Prostate gland (tissue), 2 donors: ENCODE measurements at regions of chr6 and their contacts with region 1.

Region 1: DNA sequence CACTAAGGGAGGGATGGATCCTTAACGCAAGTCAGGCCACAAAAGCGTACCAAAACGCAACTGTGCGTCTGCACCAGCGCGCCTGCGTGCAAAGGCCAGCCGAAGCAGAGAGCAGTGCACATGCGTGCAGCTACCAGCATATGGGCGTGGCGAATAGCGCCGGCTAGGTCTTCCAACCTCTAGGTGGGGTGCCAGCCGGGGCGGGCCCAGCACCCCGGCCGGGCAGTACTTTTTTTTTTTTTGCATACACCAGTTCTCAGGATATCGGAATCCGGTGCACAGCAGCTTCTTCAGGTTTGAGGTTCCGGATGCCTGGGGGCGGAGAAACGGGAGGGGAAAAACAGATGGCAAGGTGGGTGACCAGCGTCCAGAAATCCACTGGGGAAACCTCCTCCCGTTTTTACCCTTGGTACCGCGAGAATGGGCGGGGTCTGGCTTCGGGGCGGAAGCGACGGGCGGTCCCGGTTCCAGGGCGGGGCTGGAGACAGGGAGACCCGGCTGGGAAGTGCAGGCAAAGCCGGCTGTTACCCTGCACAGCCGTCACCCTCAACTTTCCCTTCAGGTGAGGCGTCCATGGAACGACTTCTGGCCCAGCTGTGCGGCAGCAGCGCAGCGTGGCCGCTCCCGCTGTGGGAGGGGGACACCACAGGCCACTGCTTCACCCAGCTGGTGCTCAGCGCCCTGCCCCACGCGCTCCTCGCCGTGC is at the start of gene ABCC10:
- DNase-seq: peak; percentile 92
- H3K4me3 ChIP-seq: peak within 1 kb of the TSS; percentile 51 to 69
- H3K27ac ChIP-seq: peak within 1 kb of the TSS; percentile 75 to 77
- H3K4me1 ChIP-seq: peaks cover 3% of the 10 kb centered on the region
- H3K27me3 ChIP-seq: no peaks in the 10 kb centered on the region
- CTCF ChIP-seq: peak; percentile 19 to 64 (median 36)
- POLR2A ChIP-seq: peak; percentile 73
- total RNA-seq, gene ABCC10: 18.0 to 38.1 TPM

Region 2: GRCh38 chr6:42217519-42218367 is 1209.8 kb before region 1 on chr6 and contains the start of gene MRPS10:
- intact Hi-C with region 1: no loop called
- DNase-seq: peak; percentile 90
- H3K4me3 ChIP-seq: peak within 1 kb of the TSS; percentile 53 to 66
- H3K27ac ChIP-seq: peak within 1 kb of the TSS; percentile 51 to 72
- H3K4me1 ChIP-seq: no peaks in the 10 kb centered on the region
- H3K27me3 ChIP-seq: no peaks in the 10 kb centered on the region
- CTCF ChIP-seq: peak in 1 of 4 experiments; percentile 3
- POLR2A ChIP-seq: peak; percentile 45
- total RNA-seq, gene MRPS10: 27.5 to 31.8 TPM

Region 3: GRCh38 chr6:43355862-43356590 is 71.5 kb before region 1 on chr6:
- intact Hi-C with region 1: no loop called
- DNase-seq: no peak
- H3K4me3 ChIP-seq: no peak overlapping the region
- H3K27ac ChIP-seq: no peak overlapping the region
- H3K4me1 ChIP-seq: no peaks in the 10 kb centered on the region
- H3K27me3 ChIP-seq: no peaks in the 10 kb centered on the region
- CTCF ChIP-seq: peak in 2 of 4 experiments; percentile 17 to 20
- POLR2A ChIP-seq: no peak

Region 4: GRCh38 chr6:43369174-43370022 is 58.2 kb before region 1 on chr6 and contains the start of gene ZNF318:
- intact Hi-C with region 1: loop called (anchors 1 kb)
- DNase-seq: peak; percentile 95
- H3K4me3 ChIP-seq: peak within 1 kb of the TSS; percentile 62 to 88
- H3K27ac ChIP-seq: peak within 1 kb of the TSS; percentile 81 to 88
- H3K4me1 ChIP-seq: peaks cover 3% of the 10 kb centered on the region
- H3K27me3 ChIP-seq: no peaks in the 10 kb centered on the region
- CTCF ChIP-seq: no peak
- POLR2A ChIP-seq: no peak
- total RNA-seq, gene ZNF318: 15.1 to 41.6 TPM

Region 5: DNA sequence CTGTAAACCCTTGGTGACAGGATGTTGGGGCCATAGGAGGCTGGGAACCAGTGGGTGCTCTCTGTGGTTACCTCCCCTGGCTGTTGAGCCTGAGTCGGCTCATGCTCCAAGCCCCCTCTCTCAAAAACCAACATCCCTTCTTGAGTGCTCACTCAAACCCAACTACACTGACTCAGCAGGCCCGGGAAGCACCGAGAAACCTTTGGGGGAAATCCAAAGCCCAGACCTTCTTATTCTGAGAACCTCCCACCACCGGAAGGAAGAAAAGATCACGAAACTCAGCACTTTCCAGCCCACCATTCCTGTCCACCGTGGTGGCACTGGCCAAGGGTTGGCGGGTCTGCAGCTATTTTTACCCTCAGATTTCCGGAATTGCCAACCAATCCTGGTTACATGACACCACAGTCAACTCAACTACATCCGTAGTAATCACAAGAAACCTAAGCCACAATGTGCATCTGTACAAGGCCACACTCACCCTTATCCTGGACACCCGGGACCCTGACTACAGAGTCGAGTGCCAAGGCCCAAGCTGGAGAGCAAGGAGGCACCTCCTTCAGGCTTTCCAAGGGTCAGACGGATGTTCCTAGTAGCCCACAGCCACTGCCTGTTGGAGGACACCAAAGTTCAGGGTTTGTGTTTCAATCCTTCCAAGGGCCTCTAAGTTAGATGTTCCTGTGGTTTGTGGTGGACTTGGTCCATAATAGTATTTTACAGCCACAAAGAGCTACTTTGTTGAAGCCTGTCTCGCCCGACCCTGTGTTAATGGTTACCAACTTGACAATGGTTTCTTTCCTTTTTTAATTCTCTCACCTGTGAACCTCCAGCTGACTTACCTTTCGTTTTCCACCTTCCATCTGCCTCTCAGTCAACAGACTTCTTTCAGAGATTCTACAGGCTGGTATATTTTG is 1276.9 kb after region 1 on chr6:
- intact Hi-C with region 1: no loop called
- DNase-seq: no peak
- H3K4me3 ChIP-seq: no peak overlapping the region
- H3K27ac ChIP-seq: no peak overlapping the region
- H3K4me1 ChIP-seq: no peaks in the 10 kb centered on the region
- H3K27me3 ChIP-seq: no peaks in the 10 kb centered on the region
- CTCF ChIP-seq: no peak
- POLR2A ChIP-seq: no peak